GM12878 (cell line): ENCODE measurements at regions of chr15 and their contacts with region 1.

Region 1: GRCh38 chr15:65952425-65953053 is 83.2 kb downstream of the RAB11A start:
- DNase-seq: no peak
- ATAC-seq: peak; percentile 36; the same call in 1 of the 3 replicates
- H3K4me3 ChIP-seq: no peak overlapping the region
- H3K27ac ChIP-seq: no peak overlapping the region
- H3K4me1 ChIP-seq: no peaks in the 10 kb centered on the region
- H3K27me3 ChIP-seq: no peaks in the 10 kb centered on the region
- CTCF ChIP-seq: no peak
- EP300 ChIP-seq: no peak
- POLR2A ChIP-seq: no peak
- RAD21 ChIP-seq: no peak

Region 2: DNA sequence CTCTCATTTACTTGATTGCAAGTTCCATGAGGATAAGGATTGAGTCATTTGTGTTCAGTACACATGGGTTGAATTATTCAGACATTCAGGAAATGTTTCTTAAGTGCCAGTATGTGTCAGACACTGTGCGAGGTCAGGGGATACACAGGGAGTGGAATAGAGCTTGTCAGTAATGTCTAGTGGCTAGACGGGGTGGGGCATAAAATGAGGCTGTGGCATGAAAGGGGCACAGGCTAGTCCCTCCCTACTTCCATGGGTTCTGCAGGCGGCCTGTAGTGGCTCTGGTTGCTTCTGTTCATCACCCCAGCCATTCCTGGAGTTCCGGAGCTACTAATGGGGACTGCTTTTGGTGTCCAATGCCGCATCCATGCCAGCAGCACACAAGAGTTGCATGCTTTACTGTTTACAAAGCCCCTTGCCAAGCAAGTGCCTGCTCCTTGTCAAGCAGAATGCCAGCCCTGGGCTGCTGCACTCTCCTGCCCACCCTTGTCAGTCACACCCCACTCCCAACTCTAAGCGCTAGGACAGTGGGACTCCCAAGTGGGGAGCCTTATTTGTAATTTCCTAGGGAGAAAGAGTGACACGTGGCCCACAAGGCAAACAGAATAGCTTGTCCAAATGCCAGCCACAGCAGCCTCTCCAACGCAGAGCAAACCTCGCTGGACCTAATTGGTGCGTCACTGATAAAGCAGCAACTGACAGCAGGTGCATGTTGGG is 12.5 kb before region 1 on chr15:
- CTCF ChIA-PET with region 1: interaction called, 4 read pairs
- POLR2A ChIA-PET with region 1: no interaction called
- RAD21 ChIA-PET with region 1: no interaction called
- SMC1A ChIA-PET with region 1: interaction called, 10 read pairs
- in situ Hi-C with region 1: no loop called
- intact Hi-C with region 1: no loop called
- DNase-seq: no peak
- ATAC-seq: no peak
- H3K4me3 ChIP-seq: no peak overlapping the region
- H3K27ac ChIP-seq: no peak overlapping the region
- H3K4me1 ChIP-seq: no peaks in the 10 kb centered on the region
- H3K27me3 ChIP-seq: no peaks in the 10 kb centered on the region
- CTCF ChIP-seq: no peak
- EP300 ChIP-seq: no peak
- POLR2A ChIP-seq: no peak
- RAD21 ChIP-seq: no peak